ENCODE measurements at regions of chr13 and their contacts with region 1.

Region 1: GRCh38 chr13:48580185-48580803 is 47.4 kb upstream of the RCBTB2 start:
- DNase-seq: peak; percentile 80
- H3K4me3 ChIP-seq: no peak overlapping the region
- H3K27ac ChIP-seq: no peak overlapping the region
- H3K4me1 ChIP-seq: no peaks in the 10 kb centered on the region
- H3K27me3 ChIP-seq: peaks cover 16% of the 10 kb centered on the region
- CTCF ChIP-seq: peak; percentile 76

Region 2: DNA sequence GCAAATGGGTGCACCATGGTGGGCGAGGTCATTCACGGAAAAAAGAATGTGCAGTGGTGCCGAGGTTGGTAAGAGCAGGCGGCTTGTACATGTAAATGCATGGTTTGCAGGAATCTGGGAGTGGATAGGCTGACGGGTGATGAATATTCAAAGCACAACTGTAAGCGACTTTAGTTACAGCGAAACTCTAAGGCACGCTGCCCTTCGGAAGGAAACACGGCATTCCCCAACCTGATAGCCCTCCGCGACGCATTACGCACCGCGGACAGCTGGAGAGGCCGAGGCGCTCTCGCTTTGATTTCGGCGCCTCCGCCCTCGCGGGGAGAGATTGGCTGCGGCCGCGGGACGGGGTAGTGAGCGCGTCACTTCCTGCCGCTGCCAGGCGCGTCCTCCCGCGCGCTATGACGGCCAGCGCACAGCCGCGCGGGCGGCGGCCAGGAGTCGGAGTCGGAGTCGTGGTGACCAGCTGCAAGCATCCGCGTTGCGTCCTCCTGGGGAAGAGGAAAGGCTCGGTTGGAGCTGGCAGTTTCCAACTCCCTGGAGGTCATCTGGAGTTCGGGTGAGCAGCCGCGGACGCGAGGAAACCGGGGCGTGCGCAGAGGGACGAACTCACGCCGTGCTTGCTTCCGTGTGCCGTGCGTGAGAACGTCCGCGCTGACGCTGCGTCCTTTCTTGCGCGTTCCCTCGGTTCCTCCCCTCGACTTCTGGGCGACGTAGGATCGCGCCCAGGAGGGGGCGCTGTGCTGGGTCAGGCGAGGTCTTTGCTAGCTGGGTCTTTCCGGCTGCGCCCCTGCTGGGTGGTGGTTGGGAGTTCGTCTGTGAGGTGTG is 542.7 kb before region 1 on chr13 and contains the start of gene NUDT15:
- CTCF ChIA-PET with region 1: interaction called, 15 read pairs
- POLR2A ChIA-PET with region 1: interaction called, 3 read pairs
- intact Hi-C with region 1: no loop called
- DNase-seq: peak; percentile 99
- H3K4me3 ChIP-seq: peak within 1 kb of the TSS; percentile 58
- H3K27ac ChIP-seq: peak within 1 kb of the TSS; percentile 97
- H3K4me1 ChIP-seq: peaks cover 8% of the 10 kb centered on the region
- H3K27me3 ChIP-seq: no peaks in the 10 kb centered on the region
- CTCF ChIP-seq: peak; percentile 99
- total RNA-seq, gene NUDT15: 48.6 and 52.2 TPM in 2 replicates

Region 3: DNA sequence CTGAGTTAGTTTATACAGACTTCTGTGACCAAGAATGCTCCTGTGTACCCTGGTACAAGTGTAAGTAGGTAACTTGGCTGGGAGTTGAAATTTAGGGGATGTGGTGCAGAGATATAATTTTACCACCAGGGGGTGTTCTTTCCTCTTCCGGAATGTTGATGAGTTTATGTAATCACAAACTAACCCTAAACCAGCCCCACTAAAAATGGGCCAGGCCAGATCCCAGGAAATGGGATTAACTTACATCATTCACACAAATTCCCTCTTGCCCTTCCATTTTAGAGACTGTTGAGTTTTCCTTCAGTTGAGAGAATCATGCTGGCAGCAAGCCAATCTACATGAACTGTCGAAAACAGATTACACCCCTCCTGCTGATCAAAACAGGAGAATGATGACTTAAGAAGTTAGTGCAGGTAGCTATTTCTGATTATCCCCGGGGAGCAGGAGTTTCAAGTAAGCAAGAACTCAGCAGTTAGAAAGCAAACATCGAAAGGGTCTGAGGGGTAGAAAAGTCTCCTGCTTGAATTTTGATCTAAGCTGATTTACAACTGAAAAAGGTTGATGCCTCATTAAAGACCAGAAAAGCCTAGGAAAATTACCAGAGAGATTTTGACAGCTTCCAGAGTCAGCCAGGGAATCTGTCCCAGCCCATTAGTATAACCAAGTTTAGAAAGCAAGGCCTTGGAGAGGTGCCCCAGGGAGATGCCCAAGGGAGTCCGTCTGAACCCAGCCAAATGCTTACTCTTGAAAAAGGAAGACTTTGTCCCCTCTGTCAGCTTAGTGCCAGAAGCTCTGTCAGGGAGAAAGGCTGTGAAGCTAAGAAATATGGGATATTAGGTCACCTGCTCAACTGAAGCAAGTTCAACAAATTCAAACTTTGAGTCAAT is 453.1 kb before region 1 on chr13:
- CTCF ChIA-PET with region 1: interaction called, 21 read pairs
- POLR2A ChIA-PET with region 1: no interaction called
- intact Hi-C with region 1: loop called (anchors 1 kb)
- DNase-seq: peak; percentile 93
- H3K4me3 ChIP-seq: peak overlapping the region; percentile 7
- H3K27ac ChIP-seq: peak overlapping the region; percentile 67
- H3K4me1 ChIP-seq: peaks cover 10% of the 10 kb centered on the region
- H3K27me3 ChIP-seq: no peaks in the 10 kb centered on the region
- CTCF ChIP-seq: peak; percentile 82

Region 4: GRCh38 chr13:48233046-48233907 is 347.0 kb before region 1 on chr13 and contains the start of gene ITM2B:
- CTCF ChIA-PET with region 1: no interaction called
- POLR2A ChIA-PET with region 1: interaction called, 3 read pairs
- intact Hi-C with region 1: loop called (anchors 10 kb)
- DNase-seq: peak; percentile 83
- H3K4me3 ChIP-seq: peak within 1 kb of the TSS; percentile 98
- H3K27ac ChIP-seq: peak within 1 kb of the TSS; percentile 97
- H3K4me1 ChIP-seq: peaks cover 31% of the 10 kb centered on the region
- H3K27me3 ChIP-seq: no peaks in the 10 kb centered on the region
- CTCF ChIP-seq: peak; percentile 44; the same call in 1 of the 2 replicates
- total RNA-seq, gene ITM2B: 168 and 190 TPM in 2 replicates

Region 5: DNA sequence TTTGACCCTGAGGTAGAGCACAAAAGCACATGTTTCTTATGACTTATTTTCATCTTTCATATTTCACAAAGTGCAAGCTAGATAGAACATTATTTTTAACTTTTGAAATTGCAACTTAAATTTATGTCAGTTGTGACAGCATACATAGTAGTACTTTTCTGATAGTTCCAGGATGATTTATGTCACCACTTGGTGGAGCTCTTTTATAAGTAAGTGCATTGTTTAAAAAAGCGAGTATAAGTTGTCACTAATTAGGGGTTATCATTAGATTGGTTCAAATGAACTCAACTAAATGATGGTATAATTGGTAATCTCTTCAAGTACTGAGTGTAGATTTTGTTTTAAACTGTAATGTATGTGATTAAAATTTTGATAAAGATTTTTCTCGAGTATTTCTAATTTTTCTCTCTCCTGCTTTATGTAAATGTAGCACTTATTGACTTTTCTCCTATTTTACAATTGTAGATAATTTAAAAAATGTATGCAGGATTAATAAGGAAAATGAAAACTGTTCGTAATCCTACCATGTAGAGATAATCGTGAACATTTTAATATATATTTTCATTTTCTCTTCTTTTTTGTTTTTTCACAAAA is 245.7 kb before region 1 on chr13:
- CTCF ChIA-PET with region 1: interaction called, 13 read pairs
- POLR2A ChIA-PET with region 1: no interaction called
- intact Hi-C with region 1: loop called (anchors 1 kb)
- DNase-seq: peak; percentile 47
- H3K4me3 ChIP-seq: no peak overlapping the region
- H3K27ac ChIP-seq: no peak overlapping the region
- H3K4me1 ChIP-seq: no peaks in the 10 kb centered on the region
- H3K27me3 ChIP-seq: no peaks in the 10 kb centered on the region
- CTCF ChIP-seq: peak; percentile 72

Measured in A673 (cell line).